Vagina (tissue), 2 donors: ENCODE measurements at regions of chr19 and their contacts with region 1.

Region 1: GRCh38 chr19:33868788-33869412 is 72.2 kb downstream of the KCTD15 start:
- DNase-seq: peak in 1 of 2 donors; percentile 79
- H3K4me3 ChIP-seq: peak overlapping the region; percentile 23 to 24
- H3K27ac ChIP-seq: peak overlapping the region; percentile 70
- H3K4me1 ChIP-seq: peaks cover 25% of the 10 kb centered on the region
- H3K27me3 ChIP-seq: no peaks in the 10 kb centered on the region
- CTCF ChIP-seq: no peak
- POLR2A ChIP-seq: no peak

Region 2: DNA sequence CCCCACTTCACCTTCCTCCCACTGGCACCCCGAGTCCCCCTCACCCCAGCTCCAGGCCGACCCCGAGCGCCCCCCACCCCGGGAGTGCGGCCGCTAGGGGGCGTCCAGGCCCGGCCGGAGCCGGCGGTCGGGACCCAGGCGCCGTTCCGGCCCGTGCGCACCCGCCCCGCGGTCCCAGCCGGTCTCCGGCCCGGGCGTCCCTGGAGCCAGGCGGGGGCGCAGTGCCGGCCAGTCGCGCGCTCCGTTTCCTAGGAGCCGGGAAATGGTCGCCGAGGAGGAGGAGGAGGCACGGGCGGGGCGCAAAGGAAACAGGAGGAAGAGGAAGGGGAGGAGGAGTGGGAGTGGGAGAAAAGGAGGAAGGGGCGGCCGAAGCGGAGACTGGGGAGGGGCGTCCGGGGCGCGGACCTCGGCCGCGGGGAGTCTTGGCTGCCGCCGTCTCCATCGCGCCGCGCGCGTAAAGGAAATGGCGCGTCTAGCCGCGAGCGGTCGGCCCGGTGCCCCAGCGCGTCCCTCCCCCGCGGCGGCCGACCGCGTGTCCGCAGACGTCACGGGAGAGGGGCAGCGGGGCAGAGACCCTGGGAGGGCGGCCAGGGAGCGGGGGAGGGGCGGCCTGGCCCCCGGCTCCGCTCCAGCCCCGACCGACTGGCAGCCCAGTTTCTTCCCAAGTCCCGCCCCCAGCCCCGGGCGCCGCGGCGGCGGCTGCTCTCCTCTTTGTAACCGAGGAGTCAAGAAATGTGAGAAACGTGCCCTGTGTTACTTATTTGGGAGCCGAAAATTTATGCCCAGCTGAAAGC is 73.3 kb before region 1 on chr19:
- intact Hi-C with region 1: loop called (anchors 5 kb)
- DNase-seq: no peak
- H3K4me3 ChIP-seq: peak overlapping the region; percentile 68 to 88
- H3K27ac ChIP-seq: peak overlapping the region; percentile 97
- H3K4me1 ChIP-seq: peaks cover 25% of the 10 kb centered on the region
- H3K27me3 ChIP-seq: no peaks in the 10 kb centered on the region
- CTCF ChIP-seq: peak in 2 of 3 experiments; percentile 79 to 91
- POLR2A ChIP-seq: peak in 1 of 2 donors; percentile 41

Region 3: GRCh38 chr19:33819880-33820781 is 48.8 kb before region 1 on chr19:
- intact Hi-C with region 1: no loop called
- DNase-seq: peak in 1 of 2 donors; percentile 91
- H3K4me3 ChIP-seq: peak overlapping the region; percentile 43 to 60
- H3K27ac ChIP-seq: peak overlapping the region; percentile 78
- H3K4me1 ChIP-seq: peaks cover 40% of the 10 kb centered on the region
- H3K27me3 ChIP-seq: no peaks in the 10 kb centered on the region
- CTCF ChIP-seq: peak in 1 of 3 experiments; percentile 25
- POLR2A ChIP-seq: no peak

Region 4: GRCh38 chr19:33921165-33921564 is 52.3 kb after region 1 on chr19:
- intact Hi-C with region 1: no loop called
- DNase-seq: no peak
- H3K4me3 ChIP-seq: no peak overlapping the region
- H3K27ac ChIP-seq: no peak overlapping the region
- H3K4me1 ChIP-seq: no peaks in the 10 kb centered on the region
- H3K27me3 ChIP-seq: no peaks in the 10 kb centered on the region
- CTCF ChIP-seq: no peak
- POLR2A ChIP-seq: no peak

Region 5: DNA sequence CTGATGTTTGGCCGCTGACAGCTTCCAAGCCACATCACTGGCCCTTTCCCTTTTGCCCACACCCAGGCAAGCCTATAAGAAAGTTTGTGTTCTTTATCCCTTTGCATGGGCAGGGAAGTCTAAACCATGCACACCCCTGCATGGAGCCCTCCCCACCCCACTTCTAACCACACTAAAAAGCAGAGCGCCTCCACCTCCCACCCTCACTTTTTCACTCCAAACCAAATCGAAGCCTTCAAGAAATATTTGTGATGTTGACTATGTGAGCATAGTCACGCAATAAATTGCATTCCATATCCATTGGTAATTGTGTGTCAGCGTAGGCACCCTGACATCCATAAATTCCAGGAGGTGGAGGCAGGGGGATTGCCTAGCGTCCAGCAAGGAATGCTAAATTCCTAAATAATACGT is 199.0 kb after region 1 on chr19:
- intact Hi-C with region 1: no loop called
- DNase-seq: no peak
- H3K4me3 ChIP-seq: no peak overlapping the region
- H3K27ac ChIP-seq: no peak overlapping the region
- H3K4me1 ChIP-seq: no peaks in the 10 kb centered on the region
- H3K27me3 ChIP-seq: no peaks in the 10 kb centered on the region
- CTCF ChIP-seq: no peak
- POLR2A ChIP-seq: no peak